Cardiac septum (tissue), 1 donor: ENCODE measurements at regions of chr20 and their contacts with region 1.

Region 1: DNA sequence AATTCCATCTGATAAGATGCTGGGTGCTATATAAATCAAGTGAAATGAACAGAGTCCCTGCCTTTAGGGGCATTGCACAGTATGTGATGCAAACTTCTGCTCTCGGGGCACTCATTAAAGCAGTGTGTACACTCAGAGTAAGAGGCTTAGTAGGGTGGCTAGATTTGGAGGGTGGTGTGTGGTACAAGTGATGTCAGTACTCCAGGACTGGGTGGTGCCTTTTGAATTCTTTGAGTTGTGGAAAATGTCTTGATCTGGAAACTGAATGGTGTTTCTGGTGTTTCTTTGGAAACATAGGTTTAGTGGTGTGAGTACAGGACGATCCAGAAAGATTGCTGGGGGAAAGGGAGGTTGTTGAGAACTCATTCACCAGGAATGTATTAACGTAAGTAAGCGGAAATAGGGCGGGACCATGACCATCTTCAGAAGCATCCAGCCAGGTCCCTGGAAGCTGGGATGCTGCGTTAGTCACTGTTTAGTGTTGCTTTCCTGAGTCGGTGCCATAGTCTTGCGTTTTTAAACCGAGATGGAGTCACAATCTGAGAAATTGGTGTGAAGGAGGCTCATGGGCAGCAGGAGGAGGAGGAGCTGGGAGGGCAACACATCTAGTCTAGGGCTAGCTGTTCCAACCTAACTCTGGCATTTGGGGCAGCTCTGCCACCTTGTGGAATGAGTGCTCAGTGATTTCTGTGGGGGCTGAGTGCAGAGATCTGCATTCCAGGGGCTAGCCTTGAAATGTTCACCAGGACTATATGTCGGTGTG is 70.3 kb downstream of the SCAND1 start:
- DNase-seq: no peak

Region 2: GRCh38 chr20:35463455-35464300 is 420.3 kb before region 1 on chr20:
- intact Hi-C with region 1: loop called (anchors 10 kb)
- DNase-seq: no peak

Region 3: GRCh38 chr20:35619196-35620095 is 264.5 kb before region 1 on chr20:
- intact Hi-C with region 1: loop called (anchors 10 kb)
- DNase-seq: peak; percentile 89

Region 4: GRCh38 chr20:35699127-35699975 is 184.6 kb before region 1 on chr20 and contains the starts of genes NFS1 and ROMO1:
- intact Hi-C with region 1: loop called (anchors 10 kb)
- DNase-seq: peak; percentile 94
- total RNA-seq, gene NFS1: 55.0 TPM
- total RNA-seq, gene ROMO1: 176 TPM

Region 5: DNA sequence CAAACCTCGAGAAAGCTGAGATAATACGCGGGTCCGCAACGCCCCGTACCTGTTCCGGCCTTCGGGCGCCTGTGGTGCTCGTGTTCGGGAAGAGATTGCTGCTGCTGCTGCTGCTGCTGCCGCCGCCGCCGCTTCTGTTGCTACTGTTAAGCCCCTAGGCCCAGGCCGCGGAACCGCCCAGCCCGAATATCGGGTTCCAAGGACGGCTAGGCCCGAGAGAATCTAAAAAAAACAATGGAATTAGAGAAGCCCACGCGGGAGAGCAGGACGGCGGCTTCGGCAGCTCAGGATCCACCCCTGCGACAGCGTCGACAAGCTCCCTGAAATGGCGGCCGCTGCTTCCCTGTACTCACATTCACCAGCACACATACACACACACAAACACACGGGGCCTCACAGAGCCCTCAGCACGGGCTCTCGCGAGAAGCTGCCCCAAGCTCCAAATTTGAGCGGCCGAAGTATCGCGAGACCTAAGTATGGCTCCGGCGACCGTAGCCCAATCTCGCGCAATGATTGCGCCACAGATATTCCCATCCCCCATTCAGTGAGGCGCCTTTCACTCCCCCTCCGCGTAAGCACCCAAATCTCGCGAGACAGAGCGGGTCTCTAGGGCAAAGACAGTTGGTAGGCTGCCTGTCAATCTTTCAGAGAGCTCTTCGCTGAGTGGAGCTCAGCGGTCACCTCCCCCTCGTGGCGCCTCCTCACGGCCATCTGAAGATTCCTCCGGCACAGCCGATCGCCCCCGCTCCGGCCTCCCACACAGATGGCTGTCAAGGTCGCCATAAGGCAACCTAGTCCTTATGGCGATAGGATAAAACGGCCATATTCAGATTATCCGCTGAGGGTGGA is 141.8 kb before region 1 on chr20 and contains the start of gene RBM39:
- intact Hi-C with region 1: loop called (anchors 5 kb)
- DNase-seq: peak; percentile 100
- total RNA-seq, gene RBM39: 167 TPM

Region 6: GRCh38 chr20:35828434-35828833 is 55.5 kb before region 1 on chr20:
- intact Hi-C with region 1: loop called (anchors 5 kb)
- DNase-seq: no peak